ENCODE measurements at regions of chr22 and their contacts with region 1.

Region 1: GRCh38 chr22:26857169-26857568 is 199.8 kb downstream of the MIAT start:
- DNase-seq: no peak
- H3K27ac ChIP-seq: no peak overlapping the region
- CTCF ChIP-seq: no peak

Region 2: DNA sequence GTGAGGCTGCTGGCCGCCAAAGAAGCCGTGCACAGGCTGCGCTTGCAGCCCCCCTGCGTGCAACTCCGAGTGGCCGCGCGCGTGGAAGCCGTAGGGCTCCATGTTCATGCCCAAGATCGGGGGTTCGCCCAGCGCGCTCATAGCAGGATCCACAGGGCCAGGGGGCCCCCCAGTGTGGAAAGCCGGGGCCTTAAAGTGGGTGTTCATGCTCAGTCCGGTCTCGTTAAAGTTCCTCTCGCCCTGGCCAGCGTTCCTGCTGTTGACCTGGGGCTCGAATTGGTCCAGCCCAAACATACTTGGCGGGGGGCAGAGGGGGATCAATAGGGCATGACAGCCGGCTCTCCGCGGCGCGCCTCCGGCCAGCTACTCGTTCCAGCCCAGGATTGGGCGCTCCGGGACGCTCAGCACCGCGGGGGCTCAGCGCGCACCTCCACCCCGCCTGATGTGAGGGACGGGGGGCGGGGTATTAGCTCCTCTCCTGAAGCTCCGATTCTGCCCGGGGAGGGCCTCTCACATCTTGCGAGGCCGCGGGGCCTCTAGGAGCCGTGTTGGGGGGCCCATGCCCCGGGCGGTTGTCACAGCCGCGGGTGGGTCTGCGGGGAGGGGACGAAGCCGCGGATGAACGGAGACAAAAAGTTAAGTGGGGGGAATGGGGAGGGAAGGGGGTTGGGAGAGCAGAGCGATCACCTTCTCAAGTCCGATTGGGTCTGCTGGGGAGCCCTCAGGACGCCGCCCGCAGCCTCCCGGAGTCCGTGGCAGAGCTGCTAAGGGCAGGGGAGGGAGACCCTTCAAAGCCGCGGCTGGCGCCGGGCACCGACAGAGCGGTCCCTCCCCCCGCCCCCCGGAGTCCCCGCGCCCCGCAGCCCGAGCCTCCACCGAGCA is 943.3 kb after region 1 on chr22:
- CTCF ChIA-PET with region 1: no interaction called
- POLR2A ChIA-PET with region 1: interaction called, 13 read pairs
- DNase-seq: peak; percentile 50
- H3K27ac ChIP-seq: peak overlapping the region; percentile 92
- CTCF ChIP-seq: no peak

Measured in RWPE1 (cell line).